Right cardiac atrium (tissue), 5 donors: ENCODE measurements at regions of chr13 and their contacts with region 1.

Region 1: DNA sequence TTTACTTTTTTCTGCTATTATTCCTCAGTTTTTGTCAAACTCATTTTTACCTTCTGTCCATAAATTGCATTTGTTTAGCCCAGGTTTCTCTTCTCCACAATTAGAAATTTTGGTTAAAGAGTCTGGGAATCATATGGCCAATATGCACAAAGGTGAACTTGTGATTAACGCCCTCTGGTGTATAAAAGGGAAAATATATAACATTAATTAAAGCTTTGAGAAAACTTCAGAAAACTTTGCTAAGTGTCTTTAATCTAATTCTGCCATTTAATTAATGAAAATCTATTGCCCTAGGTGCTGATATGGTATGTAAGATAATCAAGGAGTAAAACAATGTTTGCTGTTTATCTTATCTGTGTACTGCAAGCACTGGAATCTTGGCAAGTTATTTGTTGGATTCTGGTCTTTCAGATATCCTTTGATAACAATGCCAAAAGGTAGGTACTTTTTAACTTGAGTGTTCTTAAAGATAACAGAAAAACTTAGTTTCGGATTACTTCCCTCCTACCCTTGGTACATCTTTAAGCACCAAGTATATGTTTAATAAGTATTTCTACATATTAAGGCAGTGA is 402.6 kb downstream of the SUCLA2 start:
- DNase-seq: no peak
- ATAC-seq: no peak
- H3K4me3 ChIP-seq: no peak overlapping the region
- H3K27ac ChIP-seq: no peak overlapping the region
- H3K4me1 ChIP-seq: no peaks in the 10 kb centered on the region
- H3K27me3 ChIP-seq: no peaks in the 10 kb centered on the region

Region 2: DNA sequence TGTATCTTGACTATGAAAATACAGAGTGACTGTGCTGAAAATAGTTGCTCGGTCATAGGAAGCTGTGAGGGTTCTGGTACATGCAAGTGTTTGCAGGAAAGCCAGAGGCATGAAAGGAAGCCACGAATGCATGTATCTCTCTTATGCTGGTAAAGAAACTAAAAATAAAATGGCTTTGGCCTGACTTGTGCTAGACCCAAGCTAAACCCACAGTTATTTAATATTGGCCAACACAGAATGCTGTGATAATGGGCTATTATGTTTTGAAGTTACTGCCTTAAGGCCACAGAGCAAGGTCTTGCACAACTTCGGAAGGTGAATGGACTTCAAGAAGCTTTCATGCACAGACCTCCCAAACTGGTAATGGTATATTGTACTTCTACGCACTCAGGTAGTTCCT is 183.4 kb before region 1 on chr13:
- intact Hi-C with region 1: loop called in 2 of 4 experiments (anchors 5 to 10 kb)
- DNase-seq: no peak
- ATAC-seq: no peak
- H3K4me3 ChIP-seq: no peak overlapping the region
- H3K27ac ChIP-seq: no peak overlapping the region
- H3K4me1 ChIP-seq: no peaks in the 10 kb centered on the region
- H3K27me3 ChIP-seq: no peaks in the 10 kb centered on the region

Region 3: DNA sequence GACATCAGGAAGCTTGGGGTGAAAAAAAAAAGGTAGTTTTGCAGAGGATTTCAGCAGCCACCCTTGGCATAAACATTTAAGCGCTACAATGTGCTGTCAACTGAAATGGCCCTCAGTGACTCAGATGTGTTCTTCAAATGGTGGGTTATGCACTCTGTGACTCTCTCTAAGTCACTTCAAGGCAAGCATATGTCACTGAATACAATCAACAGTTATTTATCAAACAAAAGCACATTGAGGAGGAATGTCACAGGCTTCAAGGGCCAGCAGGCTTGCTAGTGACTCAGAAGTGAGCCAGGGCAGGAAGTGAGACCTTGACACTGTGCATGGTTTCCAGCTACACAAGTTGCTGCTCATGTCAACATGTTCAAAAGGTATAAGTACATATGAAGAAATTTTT is 177.9 kb before region 1 on chr13:
- intact Hi-C with region 1: loop called in 2 of 4 experiments (anchors 5 to 10 kb)
- DNase-seq: no peak
- ATAC-seq: peak in 1 of 2 donors; percentile 50
- H3K4me3 ChIP-seq: no peak overlapping the region
- H3K27ac ChIP-seq: no peak overlapping the region
- H3K4me1 ChIP-seq: no peaks in the 10 kb centered on the region
- H3K27me3 ChIP-seq: no peaks in the 10 kb centered on the region

Region 4: DNA sequence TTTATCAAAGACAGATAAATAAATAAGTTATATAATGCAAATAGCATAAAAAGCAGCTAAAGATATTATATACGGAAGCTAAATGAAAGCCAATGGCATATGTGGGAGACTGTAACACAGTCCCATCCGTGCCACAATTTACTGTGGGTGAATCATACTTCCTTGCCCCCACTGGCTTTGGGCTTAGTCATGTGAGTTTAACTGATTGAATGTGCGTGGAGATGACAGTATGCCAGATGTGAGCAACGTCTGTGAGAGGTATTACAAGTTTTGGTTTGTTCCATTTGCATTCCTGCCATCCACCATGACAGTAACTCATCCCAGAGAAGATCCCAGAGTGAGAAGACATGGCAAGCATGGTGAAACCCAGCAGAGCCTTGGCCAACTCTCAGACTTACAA is 62.6 kb after region 1 on chr13:
- intact Hi-C with region 1: no loop called
- DNase-seq: no peak
- ATAC-seq: no peak
- H3K4me3 ChIP-seq: no peak overlapping the region
- H3K27ac ChIP-seq: no peak overlapping the region
- H3K4me1 ChIP-seq: no peaks in the 10 kb centered on the region
- H3K27me3 ChIP-seq: no peaks in the 10 kb centered on the region

Region 5: GRCh38 chr13:47890146-47890814 is 291.9 kb after region 1 on chr13:
- intact Hi-C with region 1: no loop called
- DNase-seq: no peak
- ATAC-seq: no peak
- H3K4me3 ChIP-seq: no peak overlapping the region
- H3K27ac ChIP-seq: no peak overlapping the region
- H3K4me1 ChIP-seq: no peaks in the 10 kb centered on the region
- H3K27me3 ChIP-seq: no peaks in the 10 kb centered on the region